ENCODE measurements at regions of chr13 and their contacts with region 1.

Region 1: DNA sequence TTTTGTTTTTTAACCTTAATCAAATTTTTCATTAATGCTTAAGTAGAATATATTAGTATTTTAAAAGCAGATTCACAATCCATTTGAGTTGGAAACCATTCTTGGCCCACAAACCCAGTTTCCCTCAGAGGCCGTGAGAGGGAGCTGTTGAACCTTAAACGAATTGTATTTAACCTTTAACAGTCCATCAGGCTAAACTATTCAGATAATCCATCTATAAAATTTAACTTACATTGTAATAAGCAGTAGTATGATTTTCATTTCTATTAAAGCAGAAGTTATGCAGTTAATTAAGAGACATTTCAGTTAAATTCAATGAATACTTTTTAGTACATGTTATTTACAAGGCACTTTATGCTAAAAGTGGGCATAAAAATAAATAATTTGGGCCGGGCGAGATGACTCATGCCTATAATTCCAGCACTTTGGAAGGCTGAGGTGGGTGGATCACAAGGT is 123.1 kb upstream of the C1QTNF9B start:
- DNase-seq: no peak
- H3K4me3 ChIP-seq: no peak overlapping the region
- H3K27ac ChIP-seq: no peak overlapping the region
- H3K4me1 ChIP-seq: no peaks in the 10 kb centered on the region
- H3K27me3 ChIP-seq: no peaks in the 10 kb centered on the region
- CTCF ChIP-seq: peak in 2 of 3 experiments; percentile 62 to 70; a peak in 3 of 4 replicates
- EP300 ChIP-seq: no peak
- POLR2A ChIP-seq: no peak
- RAD21 ChIP-seq: peak; percentile 86 to 90

Region 2: DNA sequence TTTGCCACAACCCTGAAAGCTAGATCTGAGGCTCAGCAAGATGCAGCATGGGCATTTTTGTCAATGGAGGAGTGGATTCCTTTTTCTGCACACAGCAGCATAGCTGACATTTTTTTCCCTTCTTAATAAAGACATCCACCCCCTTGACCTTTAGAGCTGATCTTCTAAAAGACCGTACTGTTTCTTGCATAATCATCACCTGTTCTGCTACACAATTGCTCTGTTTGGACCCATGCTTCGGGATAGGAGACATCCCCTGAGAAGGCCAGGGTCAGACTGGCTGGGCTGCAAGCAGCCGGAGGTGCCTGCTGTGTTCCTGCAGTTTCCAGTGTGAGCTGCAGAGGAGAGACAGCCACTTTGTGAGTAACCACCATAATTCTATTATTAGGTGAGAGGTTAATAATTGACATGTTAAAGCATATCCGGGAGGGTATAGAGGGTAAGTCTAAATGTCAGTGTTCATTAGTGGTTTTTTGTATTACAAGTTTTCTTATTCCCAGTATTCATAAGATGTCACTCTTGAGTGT is 14.6 kb before region 1 on chr13:
- CTCF ChIA-PET with region 1: interaction called, 67 read pairs
- POLR2A ChIA-PET with region 1: no interaction called
- DNase-seq: no peak
- H3K4me3 ChIP-seq: no peak overlapping the region
- H3K27ac ChIP-seq: no peak overlapping the region
- H3K4me1 ChIP-seq: 0 out of 7 replicates have a peak, but pooled peaks cover 0 to 2% (median 0%) of the 10 kb centered on the region in 4 experiments
- H3K27me3 ChIP-seq: no peaks in the 10 kb centered on the region
- CTCF ChIP-seq: no peak
- EP300 ChIP-seq: no peak
- POLR2A ChIP-seq: no peak
- RAD21 ChIP-seq: no peak

Region 3: DNA sequence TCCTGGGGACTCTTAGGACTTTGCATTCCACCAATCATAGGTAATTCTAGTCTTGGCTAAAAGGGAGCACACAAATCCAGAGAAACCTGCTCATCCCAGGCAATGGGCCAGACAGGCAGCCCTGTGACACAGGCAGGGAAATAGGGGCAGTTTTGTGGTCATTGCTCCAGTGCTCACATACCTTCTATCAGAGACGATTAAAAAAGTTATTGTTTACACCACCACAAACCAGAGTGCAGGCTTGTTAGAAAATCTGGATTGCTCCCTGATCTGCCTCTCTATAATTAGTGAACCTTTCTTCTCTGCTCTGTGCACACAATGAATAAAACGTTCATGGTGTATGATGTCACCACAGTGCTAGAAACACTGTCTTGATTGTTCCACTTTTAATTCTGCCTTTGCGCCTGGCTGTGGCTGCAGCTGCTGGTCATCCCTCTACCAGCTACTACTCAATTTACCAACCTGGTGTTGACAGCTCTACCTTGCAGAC is 18.5 kb after region 1 on chr13:
- CTCF ChIA-PET with region 1: interaction called, 17 read pairs
- POLR2A ChIA-PET with region 1: no interaction called
- DNase-seq: no peak
- H3K4me3 ChIP-seq: no peak overlapping the region
- H3K27ac ChIP-seq: no peak overlapping the region
- H3K4me1 ChIP-seq: peaks cover 0 to 9% (median 4%) of the 10 kb centered on the region in 4 experiments; a peak in 4 of 7 replicates
- H3K27me3 ChIP-seq: peaks cover 8 to 48% (median 39%) of the 10 kb centered on the region in 4 experiments
- CTCF ChIP-seq: no peak
- EP300 ChIP-seq: no peak
- POLR2A ChIP-seq: no peak
- RAD21 ChIP-seq: no peak

Region 4: DNA sequence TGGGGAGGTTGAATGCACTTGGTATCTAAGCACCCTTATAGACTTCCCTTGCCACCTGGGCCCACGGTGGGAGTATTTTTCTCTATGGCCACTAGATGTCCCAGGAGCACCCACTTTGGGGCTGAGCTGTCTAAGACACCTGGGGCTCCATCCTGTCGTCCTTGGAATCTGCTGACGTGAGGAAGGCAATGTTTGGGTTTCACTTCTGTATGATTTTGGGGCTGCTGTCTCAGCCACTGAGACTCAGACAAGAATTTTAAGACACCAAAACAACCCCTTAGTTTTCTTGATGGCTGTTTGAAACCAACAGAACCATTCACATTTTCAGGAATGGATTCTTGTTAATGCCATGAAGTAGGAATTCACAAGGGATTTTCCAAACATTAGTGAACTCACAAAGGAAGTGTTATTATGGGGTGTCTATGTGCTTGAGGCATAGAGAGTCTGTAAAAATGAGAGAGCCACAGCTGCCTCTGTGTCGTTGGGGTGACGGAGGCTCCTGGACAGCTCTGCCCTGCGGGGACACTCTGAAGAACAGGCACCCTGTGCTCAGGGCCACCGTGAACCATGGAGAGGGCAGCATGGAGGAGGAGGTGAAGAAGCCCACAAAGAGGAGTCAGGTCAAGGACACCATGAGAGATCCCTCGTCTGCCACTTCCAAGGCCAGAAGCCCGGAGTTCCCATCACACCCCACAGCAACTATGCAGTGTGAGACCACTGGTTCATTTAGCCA is 33.3 kb after region 1 on chr13:
- CTCF ChIA-PET with region 1: interaction called, 14 read pairs
- POLR2A ChIA-PET with region 1: no interaction called
- DNase-seq: peak; percentile 49 to 76
- H3K4me3 ChIP-seq: no peak overlapping the region
- H3K27ac ChIP-seq: no peak overlapping the region
- H3K4me1 ChIP-seq: peaks cover 0 to 13% (median 6%) of the 10 kb centered on the region in 4 experiments; a peak in 5 of 7 replicates
- H3K27me3 ChIP-seq: no peaks in the 10 kb centered on the region
- CTCF ChIP-seq: peak; percentile 59 to 80 (median 77)
- EP300 ChIP-seq: no peak
- POLR2A ChIP-seq: no peak
- RAD21 ChIP-seq: peak; percentile 91 to 93

Region 5: DNA sequence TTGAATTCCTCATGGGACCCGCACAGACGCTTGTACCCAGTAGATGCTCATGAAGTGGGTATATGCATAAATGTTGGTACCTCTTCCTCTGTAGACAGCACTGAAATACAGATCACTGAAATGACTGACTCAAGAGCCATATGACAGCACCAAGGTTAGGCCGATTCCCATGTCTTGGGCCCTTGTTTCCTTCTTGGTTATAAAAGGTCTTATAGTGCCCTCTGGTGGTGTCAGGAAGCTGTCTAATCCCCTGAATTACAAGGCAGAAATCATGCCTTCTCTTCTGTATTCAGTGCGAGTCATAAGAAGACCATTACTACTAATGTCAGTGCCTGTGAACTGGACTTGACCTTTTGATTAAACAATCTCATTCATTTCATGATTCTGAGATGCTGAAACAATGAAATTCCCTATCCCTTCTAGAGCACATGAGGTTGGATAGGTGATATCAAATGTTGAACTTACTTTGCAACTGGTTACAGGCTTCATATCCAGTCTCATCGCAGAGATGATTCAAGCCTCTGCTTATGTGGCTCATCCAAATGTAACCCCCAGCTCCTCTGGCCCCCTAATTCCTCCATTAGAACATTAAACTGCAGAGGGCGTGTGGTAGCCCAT is 199.8 kb after region 1 on chr13:
- CTCF ChIA-PET with region 1: interaction called, 130 read pairs
- POLR2A ChIA-PET with region 1: no interaction called
- DNase-seq: no peak
- H3K4me3 ChIP-seq: no peak overlapping the region
- H3K27ac ChIP-seq: no peak overlapping the region
- H3K4me1 ChIP-seq: peaks cover 8 to 20% (median 17%) of the 10 kb centered on the region in 4 experiments
- H3K27me3 ChIP-seq: no peaks in the 10 kb centered on the region
- CTCF ChIP-seq: peak in 2 of 3 experiments; percentile 76 to 87; a peak in 3 of 4 replicates
- EP300 ChIP-seq: no peak
- POLR2A ChIP-seq: no peak
- RAD21 ChIP-seq: peak; percentile 95 to 98

Region 6: GRCh38 chr13:24228852-24229458 is 208.6 kb after region 1 on chr13:
- CTCF ChIA-PET with region 1: interaction called, 58 read pairs
- POLR2A ChIA-PET with region 1: no interaction called
- DNase-seq: no peak
- H3K4me3 ChIP-seq: no peak overlapping the region
- H3K27ac ChIP-seq: no peak overlapping the region
- H3K4me1 ChIP-seq: peaks cover 0 to 10% (median 0%) of the 10 kb centered on the region in 4 experiments; a peak in 3 of 7 replicates
- H3K27me3 ChIP-seq: no peaks in the 10 kb centered on the region
- CTCF ChIP-seq: peak in 2 of 3 experiments; percentile 74 to 92; a peak in 3 of 4 replicates
- EP300 ChIP-seq: no peak
- POLR2A ChIP-seq: no peak
- RAD21 ChIP-seq: peak; percentile 68 to 77

Measured in H1 (cell line).